ENCODE measurements at regions of chr3 and their contacts with region 1.

Region 1: DNA sequence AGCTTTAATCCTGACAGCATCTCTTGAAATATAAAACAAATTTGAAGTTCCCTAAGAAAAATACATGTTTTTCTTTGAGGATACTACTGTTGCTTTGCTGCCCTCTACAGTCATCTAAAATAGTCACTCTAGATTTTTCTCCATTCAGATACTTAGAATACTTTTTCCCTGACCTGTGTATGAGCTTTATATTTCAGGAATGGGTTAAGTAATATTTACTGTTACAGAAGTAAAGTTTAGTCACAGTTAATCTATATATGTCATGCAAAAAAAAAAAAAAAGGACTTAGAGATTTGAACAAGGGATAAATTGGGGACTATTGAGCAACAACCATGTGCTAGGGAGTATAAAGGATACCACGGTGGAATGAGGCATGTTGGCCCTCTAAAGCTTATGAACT is 8.8 kb downstream of the NECTIN3 start:
- DNase-seq: peak; percentile 55
- H3K4me3 ChIP-seq: no peak overlapping the region
- H3K27ac ChIP-seq: no peak overlapping the region
- H3K4me1 ChIP-seq: peaks cover 27% of the 10 kb centered on the region
- H3K27me3 ChIP-seq: no peaks in the 10 kb centered on the region
- CTCF ChIP-seq: peak; percentile 63

Region 2: DNA sequence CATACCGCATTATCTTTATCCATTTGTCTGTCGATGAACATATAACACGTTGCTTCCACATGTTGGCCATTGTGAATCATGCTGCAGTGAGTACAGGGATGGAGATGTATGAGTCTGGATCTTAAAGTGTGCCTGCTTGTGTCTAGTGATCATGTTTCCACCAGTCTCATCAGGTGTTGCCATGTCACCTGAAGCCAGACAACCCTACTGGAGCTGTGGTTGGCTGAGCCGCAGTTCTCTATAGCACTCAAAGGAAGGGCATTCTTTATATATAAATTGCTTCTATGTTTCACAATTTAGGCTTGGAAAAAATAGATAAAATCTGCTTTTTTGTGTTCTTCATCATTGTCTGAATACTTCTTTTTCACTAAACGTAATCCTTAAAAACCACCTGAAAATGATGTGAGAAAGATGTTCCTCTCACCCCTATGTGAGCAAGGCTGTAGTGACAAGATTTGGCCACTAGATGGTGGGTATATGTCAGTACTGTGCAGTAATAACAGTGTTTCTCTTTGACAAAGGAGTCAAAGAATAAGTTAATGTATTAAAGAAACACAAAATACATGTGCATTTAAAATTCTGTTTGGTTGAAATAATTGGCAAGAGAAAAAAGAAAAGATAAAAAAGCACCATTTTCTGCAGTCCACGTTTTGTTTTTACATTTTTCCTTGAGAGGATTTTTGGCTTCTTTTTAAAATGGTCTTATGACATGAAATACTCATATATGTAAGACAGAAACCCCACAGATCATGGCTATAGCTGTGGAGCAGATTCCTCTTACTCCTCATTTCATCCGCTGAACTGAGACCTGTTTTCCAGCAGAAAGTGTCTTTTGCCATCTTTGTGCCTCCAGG is 1348.6 kb before region 1 on chr3:
- CTCF ChIA-PET with region 1: interaction called, 13 read pairs
- POLR2A ChIA-PET with region 1: no interaction called
- intact Hi-C with region 1: loop called (anchors 2 kb)
- DNase-seq: peak; percentile 58
- H3K4me3 ChIP-seq: no peak overlapping the region
- H3K27ac ChIP-seq: no peak overlapping the region
- H3K4me1 ChIP-seq: no peaks in the 10 kb centered on the region
- H3K27me3 ChIP-seq: no peaks in the 10 kb centered on the region
- CTCF ChIP-seq: peak; percentile 83

Region 3: DNA sequence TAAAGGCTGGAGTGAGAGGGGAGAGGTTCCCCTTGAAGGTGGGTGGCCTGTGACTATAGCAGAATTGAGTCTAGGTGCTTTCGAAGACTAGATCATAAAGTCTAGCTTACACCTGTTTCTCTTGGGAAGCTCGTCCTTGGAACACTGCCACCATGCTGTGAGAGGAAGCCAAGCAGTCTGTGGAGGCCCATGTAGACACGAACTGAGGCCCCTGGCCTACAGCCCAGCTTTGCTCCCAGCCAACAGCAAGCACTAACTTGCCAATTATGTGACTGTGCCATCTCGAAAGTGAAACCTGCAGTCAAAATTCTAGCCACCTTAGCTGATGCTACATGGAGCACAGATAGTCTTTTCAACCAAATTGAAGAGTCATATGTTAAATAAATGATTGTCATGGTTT is 199.3 kb before region 1 on chr3:
- CTCF ChIA-PET with region 1: interaction called, 12 read pairs
- POLR2A ChIA-PET with region 1: no interaction called
- intact Hi-C with region 1: no loop called
- DNase-seq: peak; percentile 42
- H3K4me3 ChIP-seq: no peak overlapping the region
- H3K27ac ChIP-seq: no peak overlapping the region
- H3K4me1 ChIP-seq: no peaks in the 10 kb centered on the region
- H3K27me3 ChIP-seq: no peaks in the 10 kb centered on the region
- CTCF ChIP-seq: peak; percentile 41

Region 4: GRCh38 chr3:111338059-111338698 is 257.8 kb after region 1 on chr3:
- CTCF ChIA-PET with region 1: no interaction called
- POLR2A ChIA-PET with region 1: no interaction called
- intact Hi-C with region 1: loop called (anchors 5 kb)
- DNase-seq: peak; percentile 82
- H3K4me3 ChIP-seq: no peak overlapping the region
- H3K27ac ChIP-seq: no peak overlapping the region
- H3K4me1 ChIP-seq: no peaks in the 10 kb centered on the region
- H3K27me3 ChIP-seq: no peaks in the 10 kb centered on the region
- CTCF ChIP-seq: peak; percentile 85

Region 5: DNA sequence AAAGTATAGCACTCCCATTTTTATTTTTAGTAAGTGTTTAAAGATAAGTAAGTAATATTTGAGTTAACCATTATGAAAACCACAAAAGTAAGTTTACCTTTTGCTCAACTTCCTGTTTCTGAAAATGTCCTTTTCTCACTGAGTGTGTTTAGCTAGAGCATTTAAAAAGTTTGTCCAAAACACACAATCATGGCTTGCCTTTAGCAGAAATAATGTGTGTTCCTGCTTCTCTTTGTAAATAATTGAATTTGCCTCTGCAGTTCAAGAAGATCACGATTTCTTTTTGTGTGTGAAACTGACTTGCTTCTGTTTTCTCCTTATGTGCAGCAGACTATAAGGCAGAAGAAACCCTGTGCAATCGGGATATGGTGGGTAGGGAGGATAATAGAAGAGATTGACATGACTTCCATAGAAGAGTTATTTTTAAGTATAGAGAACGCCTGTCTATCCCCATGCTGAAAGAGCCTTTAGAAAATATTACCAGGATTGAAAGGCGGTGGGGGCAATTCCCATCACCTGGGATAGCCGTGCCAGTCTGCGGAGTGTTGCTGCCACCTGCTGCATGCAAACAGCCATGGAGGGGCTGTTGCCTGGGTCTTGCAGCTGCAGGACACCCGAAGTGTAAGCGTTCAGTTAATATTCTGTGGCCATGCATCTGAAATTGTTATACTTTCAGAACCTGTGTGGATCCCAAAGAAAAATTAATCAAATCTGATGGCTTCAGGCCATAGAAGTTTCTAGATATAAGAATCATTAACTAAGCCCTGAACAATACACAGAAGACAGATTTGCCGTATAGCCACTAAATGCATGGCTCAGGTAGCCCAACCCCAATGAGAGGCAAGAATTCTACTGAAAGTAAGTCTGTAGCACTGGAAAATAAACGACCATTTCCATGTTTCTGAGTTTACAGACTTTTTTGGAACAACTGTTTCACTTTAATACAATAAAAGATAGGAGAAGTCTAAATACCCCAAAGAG is 459.2 kb after region 1 on chr3:
- CTCF ChIA-PET with region 1: no interaction called
- POLR2A ChIA-PET with region 1: no interaction called
- intact Hi-C with region 1: loop called (anchors 10 kb)
- DNase-seq: peak; percentile 22
- H3K4me3 ChIP-seq: no peak overlapping the region
- H3K27ac ChIP-seq: no peak overlapping the region
- H3K4me1 ChIP-seq: no peaks in the 10 kb centered on the region
- H3K27me3 ChIP-seq: no peaks in the 10 kb centered on the region
- CTCF ChIP-seq: peak; percentile 64

Measured in A673 (cell line).